ENCODE measurements at regions of chr17 and their contacts with region 1.

Region 1: DNA sequence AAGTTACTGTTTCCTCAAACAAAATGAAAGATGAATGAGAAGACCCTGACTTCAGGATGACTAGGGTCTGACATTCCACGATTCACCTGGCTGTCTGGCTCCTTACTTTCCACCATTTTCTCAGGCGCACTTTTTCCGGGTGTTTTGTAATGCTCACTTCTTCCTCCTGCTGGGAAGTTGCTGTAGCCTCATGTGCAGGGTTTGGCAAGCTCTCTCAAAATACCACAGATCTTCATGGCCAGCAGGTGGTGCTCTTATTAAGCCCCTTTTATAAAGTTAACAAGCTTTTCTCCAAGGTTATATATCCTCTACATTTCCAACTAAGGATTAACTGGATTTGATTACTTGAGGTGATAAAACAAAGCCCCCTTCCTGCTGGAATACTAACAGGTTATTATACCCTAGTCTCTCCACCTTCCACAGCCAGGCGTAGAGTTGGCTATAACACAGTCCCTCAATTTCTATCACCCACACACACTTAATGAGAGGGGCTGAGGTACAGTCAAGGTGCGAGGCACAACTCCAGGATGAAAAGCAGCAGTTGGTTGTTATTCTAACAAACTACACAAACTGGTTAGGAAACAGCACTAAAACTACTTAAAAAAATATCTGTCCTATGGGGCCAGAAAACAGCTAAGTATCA is 45.4 kb downstream of the STH start:
- DNase-seq: no peak
- H3K4me3 ChIP-seq: peak overlapping the region in 1 of 4 donors; percentile 13
- H3K27ac ChIP-seq: peak overlapping the region; percentile 32 to 77 (median 53)
- H3K4me1 ChIP-seq: peaks cover 34 to 49% (median 44%) of the 10 kb centered on the region in 4 donors
- H3K27me3 ChIP-seq: no peaks in the 10 kb centered on the region
- CTCF ChIP-seq: peak; percentile 86 to 93 (median 91)
- EP300 ChIP-seq: no peak
- POLR2A ChIP-seq: no peak

Region 2: DNA sequence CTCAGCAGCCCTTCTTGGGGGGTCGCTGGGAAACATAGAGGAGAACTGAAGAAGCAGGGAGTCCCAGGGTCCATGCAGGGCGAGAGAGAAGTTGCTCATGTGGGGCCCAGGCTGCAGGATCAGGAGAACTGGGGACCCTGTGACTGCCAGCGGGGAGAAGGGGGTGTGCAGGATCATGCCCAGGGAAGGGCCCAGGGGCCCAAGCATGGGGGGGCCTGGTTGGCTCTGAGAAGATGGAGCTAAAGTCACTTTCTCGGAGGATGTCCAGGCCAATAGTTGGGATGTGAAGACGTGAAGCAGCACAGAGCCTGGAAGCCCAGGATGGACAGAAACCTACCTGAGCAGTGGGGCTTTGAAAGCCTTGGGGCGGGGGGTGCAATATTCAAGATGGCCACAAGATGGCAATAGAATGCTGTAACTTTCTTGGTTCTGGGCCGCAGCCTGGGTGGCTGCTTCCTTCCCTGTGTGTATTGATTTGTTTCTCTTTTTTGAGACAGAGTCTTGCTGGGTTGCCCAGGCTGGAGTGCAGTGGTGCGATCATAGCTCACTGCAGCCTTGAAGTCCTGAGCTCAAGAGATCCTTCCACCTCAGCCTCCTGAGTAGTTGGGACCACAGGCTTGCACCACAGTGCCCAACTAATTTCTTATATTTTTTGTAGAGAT is 42.0 kb before region 1 on chr17:
- intact Hi-C with region 1: loop called (anchors 5 kb)
- DNase-seq: no peak
- H3K4me3 ChIP-seq: no peak overlapping the region
- H3K27ac ChIP-seq: no peak overlapping the region
- H3K4me1 ChIP-seq: peaks cover 12 to 21% (median 20%) of the 10 kb centered on the region in 4 donors
- H3K27me3 ChIP-seq: no peaks in the 10 kb centered on the region
- CTCF ChIP-seq: peak in 2 of 3 experiments; percentile 98
- EP300 ChIP-seq: no peak
- POLR2A ChIP-seq: no peak

Region 3: DNA sequence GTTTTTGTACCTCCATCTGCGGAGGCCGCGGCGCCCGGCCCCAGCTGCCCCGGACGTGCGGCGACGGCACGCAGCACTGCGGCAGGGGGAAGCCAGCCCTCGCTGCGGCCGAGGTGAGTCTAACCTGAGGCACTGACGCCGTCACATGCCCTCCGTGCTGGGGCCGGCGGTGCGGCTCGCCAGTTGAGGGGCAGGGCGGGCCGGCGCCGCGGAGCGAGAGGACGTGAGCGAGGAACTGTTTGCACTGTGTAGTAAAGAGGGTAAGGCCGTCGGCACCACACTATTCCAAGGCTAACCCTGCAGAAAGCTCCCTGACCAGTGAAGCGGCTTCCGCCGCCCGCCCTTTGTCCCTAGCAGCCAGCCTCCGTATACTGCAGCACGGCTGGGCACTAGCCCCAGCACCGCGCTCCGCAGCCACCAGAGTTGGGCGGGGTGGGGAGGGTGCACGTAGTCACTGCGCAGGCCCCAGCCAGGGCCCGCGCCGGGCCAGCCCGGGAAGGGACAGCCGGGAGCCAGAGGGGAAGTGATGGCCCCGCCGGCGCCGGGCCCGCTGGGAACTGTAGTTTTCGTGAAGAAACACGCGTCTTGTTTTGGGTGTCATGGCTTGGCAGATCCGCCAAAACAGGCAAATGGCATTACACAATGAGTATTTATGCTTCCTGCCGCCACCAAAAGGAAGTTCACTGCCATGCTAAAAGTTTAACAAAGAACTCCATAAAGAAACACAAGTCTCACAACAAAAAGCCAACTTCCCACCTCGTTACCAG is 149.4 kb after region 1 on chr17:
- intact Hi-C with region 1: loop called (anchors 2 kb)
- DNase-seq: peak; percentile 98
- H3K4me3 ChIP-seq: peak overlapping the region; percentile 96 to 100 (median 99)
- H3K27ac ChIP-seq: peak overlapping the region; percentile 100
- H3K4me1 ChIP-seq: peaks cover 34 to 63% (median 56%) of the 10 kb centered on the region in 4 donors
- H3K27me3 ChIP-seq: no peaks in the 10 kb centered on the region
- CTCF ChIP-seq: peak; percentile 29 to 43 (median 42)
- EP300 ChIP-seq: no peak
- POLR2A ChIP-seq: peak; percentile 49

Region 4: DNA sequence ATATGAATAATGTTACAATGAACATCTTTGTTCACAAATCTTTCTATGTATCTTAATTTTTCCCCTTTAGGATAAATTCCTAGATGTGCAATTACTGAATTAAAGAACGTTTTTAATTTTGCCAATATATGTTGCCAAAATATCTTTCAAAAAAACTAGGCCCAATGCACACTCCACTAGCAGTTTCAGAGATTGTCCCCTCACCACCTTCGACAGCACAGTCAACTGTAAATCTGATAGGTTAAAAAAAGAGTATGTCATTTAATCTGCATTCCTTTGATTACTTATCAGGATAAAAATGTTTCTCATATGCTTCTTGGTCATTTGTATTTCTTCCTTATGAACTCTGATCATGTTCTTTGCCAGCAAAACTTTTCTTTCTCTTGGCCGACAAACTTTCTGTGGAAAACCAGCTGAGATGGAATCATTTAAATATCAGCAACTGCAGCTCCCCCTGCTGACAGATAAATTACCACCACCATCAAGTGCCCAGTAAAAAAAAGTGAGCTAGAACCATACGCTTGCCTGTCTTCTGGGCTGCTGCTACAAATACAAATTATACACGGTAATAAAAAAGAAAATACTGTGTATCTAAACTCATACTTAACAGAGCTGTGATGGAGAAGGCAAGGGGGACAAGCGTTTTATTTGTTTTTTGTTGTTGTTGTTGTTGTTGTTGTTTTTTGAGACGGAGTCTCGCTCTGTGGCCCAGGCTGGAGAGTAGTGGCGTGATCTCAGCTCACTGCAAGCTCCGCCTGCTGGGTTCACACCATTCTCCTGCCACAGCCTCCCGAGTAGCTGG is 168.4 kb after region 1 on chr17:
- intact Hi-C with region 1: loop called (anchors 5 kb)
- DNase-seq: peak; percentile 92
- H3K4me3 ChIP-seq: no peak overlapping the region
- H3K27ac ChIP-seq: peak overlapping the region; percentile 13 to 55 (median 32)
- H3K4me1 ChIP-seq: peaks cover 7 to 47% (median 34%) of the 10 kb centered on the region in 4 donors
- H3K27me3 ChIP-seq: no peaks in the 10 kb centered on the region
- CTCF ChIP-seq: peak; percentile 77 to 89 (median 79)
- EP300 ChIP-seq: no peak
- POLR2A ChIP-seq: no peak